Heart right ventricle (tissue), 16 donors: ENCODE measurements at regions of chr9 and their contacts with region 1.

Region 1: GRCh38 chr9:6681147-6681956 is 35.8 kb upstream of the GLDC start:
- DNase-seq: peak; percentile 95 to 97
- ATAC-seq: peak; percentile 97 to 99 (median 99)
- H3K4me3 ChIP-seq: peak overlapping the region; percentile 48 to 80 (median 69)
- H3K27ac ChIP-seq: peak overlapping the region; percentile 74 to 99 (median 95)
- H3K4me1 ChIP-seq: peaks cover 0 to 39% (median 10%) of the 10 kb centered on the region in 9 donors
- H3K27me3 ChIP-seq: no peaks in the 10 kb centered on the region
- CTCF ChIP-seq: peak in 1 of 9 donors; percentile 8

Region 2: DNA sequence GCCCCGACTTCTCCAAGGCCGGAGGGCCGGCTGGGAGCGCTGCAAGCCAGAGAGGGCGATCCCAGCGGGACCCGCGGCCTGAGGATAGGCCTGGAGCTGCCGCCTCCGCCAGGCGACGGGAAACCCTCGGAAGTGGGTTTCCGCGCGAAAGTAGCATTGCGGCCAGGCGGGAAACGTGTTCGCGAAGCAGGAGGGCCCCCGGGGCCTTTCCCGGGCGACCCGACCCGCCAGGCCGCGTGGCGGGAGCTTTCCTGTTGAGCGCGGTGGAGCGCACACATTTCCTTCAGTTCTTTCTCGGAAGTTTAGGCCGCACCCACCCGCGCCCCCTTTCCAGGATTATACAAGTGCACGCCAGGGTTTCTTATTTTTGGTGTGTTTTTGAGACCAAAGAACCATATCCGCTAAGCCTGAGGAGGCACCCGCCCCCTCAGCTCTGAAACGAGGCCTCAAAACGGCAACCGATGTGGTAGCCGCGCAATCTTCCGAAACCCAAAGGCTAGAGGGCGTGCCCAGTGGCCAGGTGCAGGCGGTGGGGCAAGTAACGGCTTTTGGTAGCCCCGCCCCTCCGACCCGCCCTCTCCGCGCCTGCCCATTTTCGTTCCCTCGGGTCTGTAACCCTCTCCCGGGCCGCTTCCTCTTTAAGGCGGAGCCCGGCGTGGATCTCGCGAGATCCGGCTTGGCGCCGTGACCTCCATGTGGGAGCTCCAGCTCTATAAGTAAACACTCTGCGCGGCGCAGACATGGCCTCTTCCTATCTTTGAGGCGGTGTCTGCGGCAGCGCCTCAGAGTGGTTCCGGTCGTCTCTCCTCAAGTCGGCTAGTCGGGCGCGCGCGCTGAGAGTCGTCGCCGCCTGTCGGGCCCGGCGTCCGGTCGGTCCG is 268.6 kb before region 1 on chr9 and contains the start of gene UHRF2:
- intact Hi-C with region 1: loop called in 3 of 10 experiments (anchors 10 kb)
- DNase-seq: peak; percentile 99
- ATAC-seq: peak; percentile 98 to 99 (median 98)
- H3K4me3 ChIP-seq: peak within 1 kb of the TSS; percentile 44 to 99 (median 94)
- H3K27ac ChIP-seq: peak within 1 kb of the TSS; percentile 67 to 97 (median 89)
- H3K4me1 ChIP-seq: peaks cover 3 to 38% (median 22%) of the 10 kb centered on the region in 9 donors
- H3K27me3 ChIP-seq: peaks cover 0 to under 1% (median 0%) of the 10 kb centered on the region in 7 donors
- CTCF ChIP-seq: peak in 3 of 9 donors; percentile 4 to 7 (median 5)
- total RNA-seq, gene UHRF2: 11.2 to 19.7 (median 13.1) TPM

Region 3: GRCh38 chr9:6584881-6585597 is 96.3 kb before region 1 on chr9:
- intact Hi-C with region 1: loop called in 2 of 10 experiments (anchors 5 kb)
- DNase-seq: no peak
- ATAC-seq: no peak
- H3K4me3 ChIP-seq: no peak overlapping the region
- H3K27ac ChIP-seq: no peak overlapping the region
- H3K4me1 ChIP-seq: peaks cover 0 to 4% (median 0%) of the 10 kb centered on the region in 9 donors
- H3K27me3 ChIP-seq: peaks cover 0 to 5% (median 0%) of the 10 kb centered on the region in 7 donors
- CTCF ChIP-seq: peak in 8 of 9 donors; percentile 26 to 66 (median 56)

Region 4: GRCh38 chr9:6703898-6704639 is 22.7 kb after region 1 on chr9:
- intact Hi-C with region 1: loop called in 1 of 10 experiments (anchors 1 kb)
- DNase-seq: peak; percentile 80 to 88
- ATAC-seq: peak; percentile 93 to 98 (median 97)
- H3K4me3 ChIP-seq: peak overlapping the region; percentile 31 to 75 (median 64)
- H3K27ac ChIP-seq: peak overlapping the region in 9 of 10 donors; percentile 56 to 84 (median 79)
- H3K4me1 ChIP-seq: peaks cover 0 to 10% (median 5%) of the 10 kb centered on the region in 9 donors
- H3K27me3 ChIP-seq: no peaks in the 10 kb centered on the region
- CTCF ChIP-seq: no peak

Region 5: DNA sequence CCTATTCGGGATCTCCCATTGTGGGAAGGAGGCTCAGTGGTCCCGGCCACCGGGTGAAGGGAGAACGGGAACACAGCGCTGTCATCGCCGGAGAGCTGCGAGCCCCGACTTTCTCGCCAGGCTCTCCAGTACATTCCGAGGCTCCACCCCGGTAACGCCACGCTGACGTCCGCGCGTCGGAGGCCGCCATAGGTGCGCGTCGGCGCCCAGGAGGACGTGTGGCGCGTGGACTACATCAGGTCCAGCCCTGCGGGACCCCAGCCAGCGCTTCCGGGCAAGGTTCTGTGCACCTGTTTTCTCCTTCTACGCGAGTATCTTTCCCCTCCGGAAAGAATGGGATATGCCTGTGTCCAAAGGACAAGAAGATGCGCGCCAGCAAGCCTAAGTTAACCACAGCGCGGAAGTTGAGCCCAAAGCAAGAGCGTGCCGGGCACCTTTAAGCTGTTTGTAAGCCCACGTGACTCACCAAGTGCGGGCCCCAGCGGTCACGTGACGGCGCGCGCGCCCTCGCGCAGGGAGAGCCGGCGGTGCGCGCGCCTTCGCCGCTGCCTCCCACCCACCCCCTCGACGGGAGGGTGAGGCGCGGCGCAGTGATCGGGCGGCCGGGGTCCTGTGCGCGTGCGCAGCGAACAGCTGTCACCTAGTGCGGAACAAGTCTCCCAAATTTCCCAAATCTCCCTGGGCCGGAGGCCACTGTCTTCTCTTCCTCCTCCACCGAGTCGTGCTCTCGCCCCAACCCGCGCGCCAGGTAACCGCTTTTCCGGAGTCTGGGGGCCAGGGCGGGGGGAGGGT is 76.3 kb after region 1 on chr9 and contains the start of gene KDM4C:
- intact Hi-C with region 1: loop called in 5 of 10 experiments (anchors 1 to 10 kb)
- DNase-seq: peak; percentile 93 to 95
- ATAC-seq: peak; percentile 93 to 97 (median 97)
- H3K4me3 ChIP-seq: peak within 1 kb of the TSS; percentile 80 to 98 (median 94)
- H3K27ac ChIP-seq: peak within 1 kb of the TSS; percentile 86 to 99 (median 94)
- H3K4me1 ChIP-seq: peaks cover 0 to 24% (median 13%) of the 10 kb centered on the region in 9 donors
- H3K27me3 ChIP-seq: no peaks in the 10 kb centered on the region
- CTCF ChIP-seq: no peak
- total RNA-seq, gene KDM4C: 12.2 to 18.2 (median 14.9) TPM

Region 6: DNA sequence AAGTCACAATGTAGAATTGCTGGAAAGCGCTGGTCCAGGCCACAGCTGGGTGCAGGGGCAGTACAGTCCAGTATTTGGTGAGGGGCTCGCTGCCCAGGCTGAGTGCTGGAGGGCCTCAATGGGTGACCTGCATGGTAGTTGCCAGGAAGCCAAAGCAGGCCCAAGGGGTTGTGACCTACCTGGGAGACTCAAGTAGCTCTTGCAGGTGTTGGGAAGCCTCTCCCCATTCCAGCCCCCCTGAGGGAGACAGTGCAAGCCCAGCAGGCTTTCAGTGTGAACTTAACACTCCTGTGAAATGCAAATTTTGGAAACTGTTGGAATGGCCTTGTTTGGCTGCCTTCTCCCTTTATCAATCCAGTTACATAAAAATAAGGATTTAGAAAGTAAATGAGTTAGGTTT is 90.4 kb after region 1 on chr9:
- intact Hi-C with region 1: no loop called
- DNase-seq: no peak
- ATAC-seq: peak in 1 of 8 donors; percentile 14
- H3K4me3 ChIP-seq: no peak overlapping the region
- H3K27ac ChIP-seq: no peak overlapping the region
- H3K4me1 ChIP-seq: peaks cover 0 to 12% (median 0%) of the 10 kb centered on the region in 9 donors
- H3K27me3 ChIP-seq: no peaks in the 10 kb centered on the region
- CTCF ChIP-seq: no peak